Astrocyte of the cerebellum (primary cell): ENCODE measurements at regions of chr4 and their contacts with region 1.

Region 1: DNA sequence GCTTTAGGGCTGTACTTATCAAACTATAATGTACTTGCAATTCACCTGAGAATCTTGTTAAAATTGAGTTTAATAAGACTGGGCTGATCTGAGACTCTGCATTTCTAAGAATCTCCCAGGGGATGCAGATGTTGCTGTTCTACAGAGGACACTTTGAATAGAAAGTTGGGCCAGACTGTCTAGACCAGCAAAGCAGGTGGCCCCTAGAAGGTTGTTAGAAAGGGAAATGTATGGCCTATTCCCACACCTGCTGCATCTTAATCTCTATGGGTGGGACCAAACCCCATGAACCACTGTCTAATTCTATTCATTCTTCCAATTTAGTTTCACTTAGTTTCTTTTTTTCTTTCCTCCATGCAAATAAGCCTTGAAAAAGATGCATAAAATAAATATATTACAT is 413.2 kb upstream of the TECRL start:
- DNase-seq: no peak
- H3K4me3 ChIP-seq: no peak overlapping the region
- CTCF ChIP-seq: no peak

Region 2: DNA sequence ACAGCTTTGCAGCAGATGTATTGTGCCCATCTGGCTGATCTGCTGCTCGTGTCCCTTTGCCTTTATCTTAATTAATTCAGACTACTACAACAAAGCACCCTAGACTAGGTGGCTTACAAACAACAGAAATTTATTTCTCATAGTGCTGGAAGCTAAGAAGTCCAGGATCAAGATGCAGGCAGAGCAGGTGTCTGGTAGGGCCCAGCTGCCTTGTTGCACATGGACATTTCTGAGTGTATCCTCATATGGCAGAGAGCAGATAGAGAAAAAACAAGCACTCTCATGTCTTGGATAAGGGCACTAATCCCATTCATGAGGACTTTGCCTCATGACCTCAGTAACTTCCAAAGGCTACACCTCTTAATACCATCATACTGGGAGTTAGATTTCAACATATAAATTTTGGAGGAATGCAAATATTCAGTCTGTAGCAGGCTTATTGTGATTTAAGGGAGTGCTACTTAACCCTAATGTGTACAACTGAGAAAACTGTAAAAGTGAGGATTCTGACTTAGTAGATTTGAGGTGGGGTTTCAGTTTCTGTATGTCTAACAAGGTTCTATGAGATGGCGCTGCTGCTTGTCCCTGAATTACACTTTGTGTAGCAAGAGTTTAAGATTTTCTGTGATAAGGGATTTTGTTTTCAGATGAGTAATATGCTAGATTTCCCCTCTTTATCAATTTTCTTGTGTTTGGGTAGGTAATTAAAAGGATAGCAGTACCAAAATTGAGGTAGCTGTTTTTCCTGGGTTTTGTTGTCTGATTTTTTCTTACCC is 60.1 kb after region 1 on chr4:
- in situ Hi-C with region 1: loop called (anchors 10 kb)
- DNase-seq: no peak
- H3K4me3 ChIP-seq: no peak overlapping the region
- CTCF ChIP-seq: no peak

Region 3: GRCh38 chr4:65063601-65064000 is 241.2 kb after region 1 on chr4:
- in situ Hi-C with region 1: no loop called
- DNase-seq: no peak
- H3K4me3 ChIP-seq: no peak overlapping the region
- CTCF ChIP-seq: no peak